Activated CD8-positive, alpha-beta T cell treated with anti-CD3 and anti-CD28 coated beads, Interleukin-2, amount 10 ng/mL, durations not matched to agents 7 days and 5 days (primary cell): ENCODE measurements at regions of chr5 and their contacts with region 1.

Region 1: GRCh38 chr5:157431544-157432200 is 28.3 kb upstream of the NIPAL4 start:
- DNase-seq: peak; percentile 58
- ATAC-seq: peak; percentile 91
- H3K4me3 Mint-ChIP-seq: no peak overlapping the region
- H3K27ac Mint-ChIP-seq: no peak overlapping the region
- H3K4me1 Mint-ChIP-seq: peaks cover 3% of the 10 kb centered on the region
- H3K27me3 Mint-ChIP-seq: peaks cover 42% of the 10 kb centered on the region

Region 2: GRCh38 chr5:157449011-157449723 is 17.5 kb after region 1 on chr5:
- CTCF ChIA-PET with region 1: interaction called, 10 read pairs
- POLR2A ChIA-PET with region 1: no interaction called
- DNase-seq: no peak
- ATAC-seq: no peak
- H3K4me3 Mint-ChIP-seq: no peak overlapping the region
- H3K27ac Mint-ChIP-seq: no peak overlapping the region
- H3K4me1 Mint-ChIP-seq: no peaks in the 10 kb centered on the region
- H3K27me3 Mint-ChIP-seq: peaks cover 16% of the 10 kb centered on the region

Region 3: DNA sequence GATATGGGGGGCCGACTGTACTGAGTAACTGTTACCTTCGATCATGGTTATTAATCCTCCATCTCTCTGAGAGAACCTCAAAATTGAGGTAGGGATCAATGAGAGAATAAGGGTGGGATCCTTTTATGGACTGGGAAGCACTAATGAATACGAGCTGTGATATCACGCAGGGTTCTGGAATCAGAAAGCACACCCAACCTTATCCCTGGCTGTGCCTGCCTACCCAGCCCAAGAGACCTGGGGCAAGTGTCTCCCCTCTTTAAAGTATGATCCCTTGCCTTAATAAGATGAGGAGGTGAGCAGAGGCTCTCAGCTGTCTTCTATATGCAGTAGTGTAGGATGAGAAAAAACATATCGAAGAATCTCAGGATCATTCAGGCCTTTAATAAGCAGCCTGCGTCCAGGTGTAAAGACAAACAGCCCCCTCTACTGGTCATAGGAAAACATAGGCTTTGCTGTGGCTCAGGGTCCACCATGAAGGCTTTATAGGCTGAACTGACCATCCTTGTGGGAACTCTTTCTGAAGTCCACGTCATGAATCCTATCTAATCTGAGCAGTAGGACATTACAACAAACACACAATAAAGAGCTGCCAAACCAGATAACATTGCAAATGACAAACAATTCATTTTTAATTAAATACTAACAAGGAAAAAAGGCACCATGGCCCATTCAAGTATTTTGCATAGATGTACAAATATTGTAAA is 45.2 kb after region 1 on chr5:
- CTCF ChIA-PET with region 1: interaction called, 23 read pairs
- POLR2A ChIA-PET with region 1: no interaction called
- DNase-seq: peak; percentile 42
- ATAC-seq: peak; percentile 53
- H3K4me3 Mint-ChIP-seq: no peak overlapping the region
- H3K27ac Mint-ChIP-seq: peak overlapping the region; percentile 22
- H3K4me1 Mint-ChIP-seq: peaks cover 48% of the 10 kb centered on the region
- H3K27me3 Mint-ChIP-seq: no peaks in the 10 kb centered on the region

Region 4: GRCh38 chr5:157748760-157749461 is 317.2 kb after region 1 on chr5:
- CTCF ChIA-PET with region 1: interaction called, 57 read pairs
- POLR2A ChIA-PET with region 1: no interaction called
- DNase-seq: no peak
- ATAC-seq: no peak
- H3K4me3 Mint-ChIP-seq: no peak overlapping the region
- H3K27ac Mint-ChIP-seq: no peak overlapping the region
- H3K4me1 Mint-ChIP-seq: peaks cover 22% of the 10 kb centered on the region
- H3K27me3 Mint-ChIP-seq: no peaks in the 10 kb centered on the region